Activated T-helper 2 cell treated with anti-CD3 and anti-CD28 coated beads, Interferon-gamma antibody, Interleukin-2, Interleukin-4, amounts not matched to agents 10 μg/mL and 5 μg/mL and 100 μg/mL, durations not matched to agents 14 hours and 24 hours and 36 hours (primary cell): ENCODE measurements at regions of chr11 and their contacts with region 1.

Region 1: DNA sequence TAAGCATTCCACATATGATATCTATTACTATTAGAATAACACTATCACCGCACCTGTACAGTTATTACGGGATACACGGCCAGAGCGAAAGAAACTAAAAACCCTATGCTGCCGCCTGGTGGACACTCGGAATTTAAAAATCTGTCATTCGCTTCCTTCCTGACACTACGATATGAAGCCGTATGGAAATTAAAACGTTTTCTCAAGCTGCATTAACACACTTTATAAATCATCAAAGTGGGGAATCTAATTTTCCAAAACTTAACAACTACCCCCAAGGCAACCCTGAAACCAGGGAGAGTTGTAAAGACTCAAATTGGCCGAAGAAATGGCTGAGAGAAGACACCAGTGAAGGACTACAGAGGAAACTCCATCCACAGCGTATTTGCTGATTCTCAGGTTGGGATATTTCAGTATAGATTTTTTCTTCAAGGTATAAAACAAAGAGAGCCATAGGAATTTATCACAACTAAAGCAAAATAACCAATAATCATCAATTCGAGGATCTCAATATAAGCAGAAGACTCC is 1.4 kb downstream of the CCDC73 start:
- DNase-seq: peak; percentile 49
- H3K4me3 Mint-ChIP-seq: peak overlapping the region; percentile 13
- H3K27ac Mint-ChIP-seq: no peak overlapping the region
- H3K4me1 Mint-ChIP-seq: peaks cover 3% of the 10 kb centered on the region
- H3K27me3 Mint-ChIP-seq: peaks cover 27% of the 10 kb centered on the region

Region 2: GRCh38 chr11:32326522-32326921 is 466.5 kb before region 1 on chr11:
- intact Hi-C with region 1: loop called (anchors 1 kb)
- DNase-seq: no peak
- H3K4me3 Mint-ChIP-seq: no peak overlapping the region
- H3K27ac Mint-ChIP-seq: no peak overlapping the region
- H3K4me1 Mint-ChIP-seq: no peaks in the 10 kb centered on the region
- H3K27me3 Mint-ChIP-seq: peaks cover 20% of the 10 kb centered on the region

Region 3: DNA sequence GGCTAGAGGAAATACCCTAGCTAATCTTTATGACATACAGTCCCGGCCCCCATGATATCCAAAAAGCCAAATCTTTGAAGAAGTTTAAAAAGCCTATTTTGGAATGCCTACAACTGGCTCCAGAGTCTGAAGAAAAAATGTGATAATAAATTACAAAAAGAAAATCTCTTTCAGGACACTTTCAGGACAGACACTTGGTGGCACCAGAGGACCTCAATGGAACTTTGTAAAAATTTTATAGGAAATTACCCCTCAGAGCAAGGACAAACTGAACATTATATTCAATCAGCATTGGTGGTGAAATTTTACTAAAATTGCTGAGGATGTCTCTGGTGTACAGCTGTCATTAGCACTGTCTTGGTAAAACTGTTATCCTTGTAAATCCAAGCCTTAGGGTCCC is 79.5 kb before region 1 on chr11:
- intact Hi-C with region 1: loop called (anchors 10 kb)
- DNase-seq: no peak
- H3K4me3 Mint-ChIP-seq: no peak overlapping the region
- H3K27ac Mint-ChIP-seq: no peak overlapping the region
- H3K4me1 Mint-ChIP-seq: no peaks in the 10 kb centered on the region
- H3K27me3 Mint-ChIP-seq: peaks cover 28% of the 10 kb centered on the region

Region 4: GRCh38 chr11:33039274-33040032 is 246.4 kb after region 1 on chr11 and contains the start of gene TCP11L1:
- intact Hi-C with region 1: no loop called
- DNase-seq: peak; percentile 74
- H3K4me3 Mint-ChIP-seq: peak within 1 kb of the TSS; percentile 91
- H3K27ac Mint-ChIP-seq: peak within 1 kb of the TSS; percentile 93
- H3K4me1 Mint-ChIP-seq: peaks cover 36% of the 10 kb centered on the region
- H3K27me3 Mint-ChIP-seq: peaks cover 18% of the 10 kb centered on the region
- total RNA-seq, gene TCP11L1: 12.4 and 13.8 TPM in 2 replicates